ENCODE measurements at regions of chr1 and their contacts with region 1.

Region 1: DNA sequence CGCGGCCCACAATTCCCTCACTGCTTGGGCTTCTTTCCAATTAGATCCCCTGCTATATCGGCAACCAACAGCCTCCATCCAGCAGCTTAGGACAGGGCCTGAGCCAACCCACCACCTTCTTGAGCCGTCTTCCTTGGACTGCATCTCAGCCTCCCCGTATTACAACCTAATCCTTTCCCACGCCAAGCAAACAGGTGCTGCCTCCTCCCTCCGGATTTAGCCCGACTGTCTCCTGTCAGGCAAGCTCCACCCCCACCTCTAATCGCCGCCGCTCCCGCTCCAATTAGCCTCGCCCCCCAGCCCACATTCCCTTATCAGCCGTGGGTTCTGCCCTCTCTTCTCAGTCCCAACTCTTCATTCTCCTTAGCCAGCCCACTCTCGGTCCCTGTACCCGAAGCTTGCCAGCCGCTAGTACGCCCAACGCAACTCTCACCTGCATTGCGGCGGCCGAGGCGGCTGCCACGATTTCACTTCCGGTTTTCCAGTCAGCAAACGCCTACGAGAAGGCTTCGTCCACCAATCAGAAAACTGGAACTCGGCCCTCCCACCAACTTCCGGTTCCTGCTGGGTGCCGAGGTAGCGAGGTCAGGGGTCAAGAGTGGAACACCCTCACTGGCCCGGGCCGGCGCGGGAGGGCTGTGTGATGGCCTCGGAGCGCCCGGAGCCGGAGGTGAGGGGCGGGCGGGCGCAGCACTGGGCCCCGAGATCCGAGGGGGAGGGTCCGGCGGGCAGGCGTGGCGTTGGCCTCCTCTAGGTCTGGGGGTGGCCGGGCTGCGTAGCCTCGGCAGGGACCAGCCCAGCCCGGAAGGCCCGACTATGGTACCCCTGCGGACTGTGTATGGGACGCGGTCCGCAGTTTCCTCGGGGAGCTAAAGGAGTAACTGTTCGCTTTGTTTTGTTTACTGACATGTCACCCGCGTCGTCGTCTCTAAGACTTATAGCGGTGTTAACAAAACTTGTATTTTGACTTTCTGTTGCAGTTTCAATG is at the starts of genes MED8 and SZT2:
- DNase-seq: peak; percentile 86
- ATAC-seq: peak; percentile 97
- H3K4me3 ChIP-seq: peak within 1 kb of the TSS; percentile 87
- H3K27ac ChIP-seq: peak within 1 kb of the TSS; percentile 82
- H3K4me1 ChIP-seq: peaks cover 18% of the 10 kb centered on the region
- H3K27me3 ChIP-seq: no peaks in the 10 kb centered on the region
- CTCF ChIP-seq: no peak
- EP300 ChIP-seq: no peak
- POLR2A ChIP-seq: peak; percentile 98
- RAD21 ChIP-seq: no peak
- polyA plus RNA-seq, gene MED8: 59.8 to 61.7 TPM
- polyA plus RNA-seq, gene SZT2: 1.4 to 1.9 TPM

Region 2: DNA sequence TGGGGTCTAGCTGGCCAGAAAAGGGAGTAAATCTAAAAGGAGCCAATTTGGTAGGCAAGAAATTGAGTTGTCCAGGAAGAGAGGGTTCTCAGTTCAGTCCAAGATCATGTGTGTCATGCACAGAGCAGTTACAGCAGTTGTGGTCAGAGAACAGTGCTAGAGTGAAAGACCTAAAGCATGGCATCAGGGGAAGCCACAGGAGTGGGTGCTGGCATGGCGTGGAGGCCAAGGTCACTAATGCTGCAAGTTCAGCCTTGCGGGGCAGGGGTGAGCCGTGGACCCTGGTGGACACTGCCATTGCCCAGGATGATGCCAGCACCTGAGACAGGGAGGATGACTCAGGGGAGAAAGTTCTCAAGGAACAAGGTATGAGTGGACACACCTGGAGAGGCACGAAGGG is 136.4 kb before region 1 on chr1:
- CTCF ChIA-PET with region 1: no interaction called
- POLR2A ChIA-PET with region 1: no interaction called
- RAD21 ChIA-PET with region 1: no interaction called
- SMC1A ChIA-PET with region 1: no interaction called
- in situ Hi-C with region 1: no loop called
- intact Hi-C with region 1: no loop called
- DNase-seq: no peak
- ATAC-seq: no peak
- H3K4me3 ChIP-seq: no peak overlapping the region
- H3K27ac ChIP-seq: no peak overlapping the region
- H3K4me1 ChIP-seq: no peaks in the 10 kb centered on the region
- H3K27me3 ChIP-seq: no peaks in the 10 kb centered on the region; a peak in 1 of 4 replicates
- CTCF ChIP-seq: no peak
- EP300 ChIP-seq: no peak
- POLR2A ChIP-seq: no peak
- RAD21 ChIP-seq: no peak

Region 3: DNA sequence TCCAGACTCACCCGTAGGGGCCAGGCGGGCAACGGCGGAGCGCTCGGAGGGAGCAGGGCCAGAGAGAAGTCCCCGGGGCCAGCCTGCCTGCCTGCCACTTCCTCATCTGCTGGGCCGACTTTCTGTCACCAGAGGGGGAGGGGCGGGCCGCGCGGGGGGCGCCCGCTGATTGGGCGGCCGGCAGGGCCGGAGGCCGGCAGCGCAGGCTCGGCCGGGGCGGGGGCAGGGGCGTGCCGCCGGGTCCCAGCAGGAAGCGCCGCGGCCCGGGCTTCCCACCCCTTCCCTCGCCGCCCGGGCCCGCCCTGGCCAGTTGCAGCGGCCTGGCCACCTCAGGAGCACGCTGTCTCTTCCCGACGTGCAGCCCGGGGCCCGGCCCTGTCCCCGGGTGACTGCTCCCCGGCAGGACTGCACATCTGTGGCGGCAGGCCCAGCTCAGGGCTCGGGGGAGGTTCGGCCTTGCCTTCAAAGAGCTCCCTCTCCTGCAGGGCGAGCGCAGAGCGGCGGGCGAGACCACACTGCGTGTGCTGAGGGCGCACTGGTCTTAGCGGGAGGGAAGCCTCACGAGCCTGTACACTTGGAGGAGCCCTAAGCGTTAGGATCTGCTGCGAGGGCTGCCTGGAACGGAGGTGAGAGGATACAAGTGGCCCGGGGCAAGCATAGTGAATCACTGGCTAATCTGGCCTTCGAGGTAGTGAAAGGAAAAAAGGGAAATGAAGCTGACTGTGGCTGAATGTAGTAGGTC is 21.5 kb before region 1 on chr1 and contains the start of gene ELOVL1:
- CTCF ChIA-PET with region 1: interaction called, 7 read pairs
- POLR2A ChIA-PET with region 1: interaction called, 15 read pairs
- RAD21 ChIA-PET with region 1: interaction called, 5 read pairs
- SMC1A ChIA-PET with region 1: interaction called, 6 read pairs
- in situ Hi-C with region 1: no loop called
- intact Hi-C with region 1: loop called (anchors 2 kb)
- DNase-seq: peak; percentile 41
- ATAC-seq: peak; percentile 89
- H3K4me3 ChIP-seq: peak within 1 kb of the TSS; percentile 100
- H3K27ac ChIP-seq: peak within 1 kb of the TSS; percentile 95
- H3K4me1 ChIP-seq: peaks cover 8% of the 10 kb centered on the region
- H3K27me3 ChIP-seq: no peaks in the 10 kb centered on the region
- CTCF ChIP-seq: peak in 2 of 3 experiments; percentile 24 to 43; a peak in 4 of 6 replicates
- EP300 ChIP-seq: no peak
- POLR2A ChIP-seq: peak; percentile 94
- RAD21 ChIP-seq: no peak
- polyA plus RNA-seq, gene ELOVL1: 62.7 to 68.4 TPM

Region 4: GRCh38 chr1:43376723-43377235 is 12.8 kb before region 1 on chr1:
- CTCF ChIA-PET with region 1: interaction called, 14 read pairs
- POLR2A ChIA-PET with region 1: interaction called, 5 read pairs
- RAD21 ChIA-PET with region 1: interaction called, 3 read pairs
- SMC1A ChIA-PET with region 1: interaction called, 4 read pairs
- in situ Hi-C with region 1: no loop called
- intact Hi-C with region 1: no loop called
- DNase-seq: no peak
- ATAC-seq: no peak
- H3K4me3 ChIP-seq: no peak overlapping the region
- H3K27ac ChIP-seq: no peak overlapping the region
- H3K4me1 ChIP-seq: no peaks in the 10 kb centered on the region; the same call in 1 of the 2 replicates
- H3K27me3 ChIP-seq: no peaks in the 10 kb centered on the region
- CTCF ChIP-seq: no peak
- EP300 ChIP-seq: no peak
- POLR2A ChIP-seq: no peak
- RAD21 ChIP-seq: no peak

Region 5: DNA sequence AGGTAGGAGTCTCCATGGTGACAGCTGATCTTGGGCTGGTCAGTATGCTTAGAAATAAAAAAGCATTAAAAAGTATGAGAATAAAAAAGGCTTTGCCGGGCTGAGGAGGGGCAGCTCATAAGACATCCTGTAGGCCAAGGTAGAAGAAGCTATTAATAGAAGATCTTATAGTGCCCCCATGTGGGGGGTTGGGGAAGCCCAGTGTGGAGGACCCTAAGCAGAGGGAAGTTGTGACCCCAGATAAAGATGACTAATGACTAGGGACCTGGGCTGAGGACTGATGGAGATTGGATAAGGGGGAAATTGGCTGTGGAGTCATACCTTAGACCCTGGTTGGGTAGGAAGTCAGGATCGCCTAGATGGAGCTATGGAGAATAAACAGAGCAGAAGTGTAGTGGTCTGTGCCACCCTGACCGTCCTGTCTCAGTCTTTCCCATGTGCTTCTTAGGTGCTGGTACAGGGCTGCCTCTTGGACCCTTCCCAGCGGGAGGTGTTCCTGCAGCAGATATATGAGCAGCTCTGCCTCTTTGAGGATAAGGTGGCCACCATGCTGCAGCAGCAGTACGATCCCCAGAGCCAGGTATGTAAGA is 25.1 kb after region 1 on chr1:
- CTCF ChIA-PET with region 1: interaction called, 11 read pairs
- POLR2A ChIA-PET with region 1: interaction called, 3 read pairs
- RAD21 ChIA-PET with region 1: interaction called, 5 read pairs
- SMC1A ChIA-PET with region 1: interaction called, 14 read pairs
- in situ Hi-C with region 1: no loop called
- intact Hi-C with region 1: no loop called
- DNase-seq: no peak
- ATAC-seq: peak; percentile 90
- H3K4me3 ChIP-seq: no peak overlapping the region
- H3K27ac ChIP-seq: no peak overlapping the region
- H3K4me1 ChIP-seq: peaks cover 7% of the 10 kb centered on the region
- H3K27me3 ChIP-seq: no peaks in the 10 kb centered on the region
- CTCF ChIP-seq: peak; percentile 54 to 57 (median 55)
- EP300 ChIP-seq: no peak
- POLR2A ChIP-seq: no peak
- RAD21 ChIP-seq: peak; percentile 67

Region 6: GRCh38 chr1:43639976-43640789 is 250.6 kb after region 1 on chr1:
- CTCF ChIA-PET with region 1: no interaction called
- POLR2A ChIA-PET with region 1: no interaction called
- RAD21 ChIA-PET with region 1: no interaction called
- SMC1A ChIA-PET with region 1: no interaction called
- in situ Hi-C with region 1: no loop called
- intact Hi-C with region 1: no loop called
- DNase-seq: no peak
- ATAC-seq: no peak; the same call in 2 of the 3 replicates
- H3K4me3 ChIP-seq: no peak overlapping the region
- H3K27ac ChIP-seq: no peak overlapping the region
- H3K4me1 ChIP-seq: no peaks in the 10 kb centered on the region
- H3K27me3 ChIP-seq: no peaks in the 10 kb centered on the region
- CTCF ChIP-seq: no peak
- EP300 ChIP-seq: no peak
- POLR2A ChIP-seq: no peak
- RAD21 ChIP-seq: no peak